Activated CD4-positive, alpha-beta T cell treated with anti-CD3 and anti-CD28 coated beads for 36 hours (primary cell): ENCODE measurements at regions of chr1 and their contacts with region 1.

Region 1: GRCh38 chr1:24502709-24503058 is at the start of gene RCAN3:
- DNase-seq: peak; percentile 95
- ATAC-seq: peak; percentile 75
- H3K4me3 Mint-ChIP-seq: peak within 1 kb of the TSS; percentile 86
- H3K27ac Mint-ChIP-seq: peak within 1 kb of the TSS; percentile 94
- H3K4me1 Mint-ChIP-seq: peaks cover 59% of the 10 kb centered on the region
- H3K27me3 Mint-ChIP-seq: no peaks in the 10 kb centered on the region
- total RNA-seq, gene RCAN3: 62.3 to 67.5 TPM

Region 2: GRCh38 chr1:24195874-24196273 is 306.8 kb before region 1 on chr1:
- CTCF ChIA-PET with region 1: no interaction called
- POLR2A ChIA-PET with region 1: no interaction called
- intact Hi-C with region 1: no loop called
- DNase-seq: no peak
- ATAC-seq: no peak
- H3K4me3 Mint-ChIP-seq: no peak overlapping the region
- H3K27ac Mint-ChIP-seq: no peak overlapping the region
- H3K4me1 Mint-ChIP-seq: peaks cover 55% of the 10 kb centered on the region
- H3K27me3 Mint-ChIP-seq: peaks cover 2% of the 10 kb centered on the region

Region 3: DNA sequence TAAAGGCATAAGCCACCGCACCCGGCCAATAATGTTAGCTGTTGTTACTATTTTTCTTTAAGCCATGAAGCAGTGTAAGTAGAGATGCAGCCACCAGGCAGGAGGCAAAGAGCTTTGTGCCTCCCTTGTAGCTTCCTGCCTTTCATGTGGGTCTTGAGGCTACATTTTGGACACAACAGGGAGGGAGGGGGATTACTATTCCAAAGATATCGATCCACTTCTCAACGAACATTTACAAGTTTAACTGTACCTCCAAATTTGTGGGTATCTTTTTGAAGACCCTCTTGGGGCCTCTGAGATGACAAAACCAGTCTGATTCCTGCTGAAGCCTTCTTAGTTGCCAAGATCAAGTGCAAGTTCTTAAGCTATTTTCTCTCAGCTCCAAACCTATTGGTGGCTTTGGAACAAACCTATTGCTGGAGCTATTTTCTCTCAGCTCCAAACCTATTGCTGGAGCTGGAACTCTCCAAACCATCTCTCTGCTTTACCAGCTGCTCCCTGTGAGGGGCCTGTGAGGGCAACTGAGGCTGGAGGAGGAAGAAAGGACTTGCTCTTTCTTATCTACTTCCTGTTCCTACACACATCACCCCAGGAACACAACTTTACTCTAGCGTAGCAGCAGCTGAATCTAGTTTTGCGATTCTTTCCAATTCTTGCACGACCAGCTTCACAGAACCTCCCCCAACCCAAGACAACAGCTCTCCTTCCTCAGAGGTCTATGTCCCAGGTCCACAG is 16.2 kb before region 1 on chr1:
- CTCF ChIA-PET with region 1: interaction called, 14 read pairs
- POLR2A ChIA-PET with region 1: interaction called, 10 read pairs
- intact Hi-C with region 1: loop called (anchors 1 to 2 kb)
- DNase-seq: peak; percentile 36
- ATAC-seq: no peak
- H3K4me3 Mint-ChIP-seq: peak overlapping the region; percentile 61
- H3K27ac Mint-ChIP-seq: peak overlapping the region; percentile 91
- H3K4me1 Mint-ChIP-seq: peaks cover 79% of the 10 kb centered on the region
- H3K27me3 Mint-ChIP-seq: no peaks in the 10 kb centered on the region

Region 4: GRCh38 chr1:24513706-24514105 is 11.0 kb after region 1 on chr1:
- CTCF ChIA-PET with region 1: interaction called, 14 read pairs
- POLR2A ChIA-PET with region 1: no interaction called
- intact Hi-C with region 1: no loop called
- DNase-seq: no peak
- ATAC-seq: no peak
- H3K4me3 Mint-ChIP-seq: no peak overlapping the region
- H3K27ac Mint-ChIP-seq: peak overlapping the region; percentile 65
- H3K4me1 Mint-ChIP-seq: peaks cover 78% of the 10 kb centered on the region
- H3K27me3 Mint-ChIP-seq: no peaks in the 10 kb centered on the region

Region 5: GRCh38 chr1:24536391-24536840 is 33.7 kb after region 1 on chr1:
- CTCF ChIA-PET with region 1: interaction called, 61 read pairs
- POLR2A ChIA-PET with region 1: interaction called, 6 read pairs
- intact Hi-C with region 1: loop called (anchors 1 to 2 kb)
- DNase-seq: peak; percentile 81
- ATAC-seq: peak; percentile 52
- H3K4me3 Mint-ChIP-seq: peak overlapping the region; percentile 76
- H3K27ac Mint-ChIP-seq: peak overlapping the region; percentile 99
- H3K4me1 Mint-ChIP-seq: peaks cover 85% of the 10 kb centered on the region
- H3K27me3 Mint-ChIP-seq: no peaks in the 10 kb centered on the region